Cardiac septum (tissue), 1 donor: ENCODE measurements at regions of chr17 and their contacts with region 1.

Region 1: GRCh38 chr17:2087597-2088211 is 32.8 kb downstream of the HIC1 start:
- DNase-seq: no peak

Region 2: DNA sequence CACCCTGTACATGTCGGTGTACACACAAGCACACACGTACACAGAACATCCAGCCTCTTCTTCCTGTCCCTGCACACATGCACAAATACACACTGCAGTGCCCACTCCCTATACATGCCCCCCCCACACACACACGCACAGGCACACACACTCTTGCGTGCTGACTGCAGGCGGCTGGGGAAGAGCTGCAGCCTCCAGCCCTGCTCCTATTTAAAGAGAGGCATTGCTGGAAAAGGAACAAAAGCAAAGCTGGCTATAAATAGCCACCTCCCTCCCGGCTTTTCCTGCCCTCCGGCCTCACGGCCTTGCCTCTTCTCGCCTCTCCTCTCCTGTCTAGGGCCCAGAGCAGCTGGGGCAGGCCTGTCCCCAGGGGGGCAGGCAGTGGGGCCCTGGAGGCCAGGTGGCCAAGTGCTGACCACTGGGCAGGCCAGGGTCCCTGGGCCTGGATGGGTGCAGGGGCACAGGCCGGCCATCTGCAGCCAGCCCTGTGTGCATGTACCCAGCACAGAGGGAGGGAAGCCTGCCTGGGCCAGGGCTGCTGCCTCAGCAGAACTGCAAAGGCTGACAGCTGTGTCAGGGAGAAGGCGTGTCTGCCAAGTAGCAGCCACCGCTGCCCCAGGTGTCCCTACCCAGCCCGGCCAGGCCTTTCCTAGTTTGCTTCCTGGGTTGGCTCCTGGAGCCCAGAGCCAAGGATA is 88.0 kb before region 1 on chr17:
- intact Hi-C with region 1: no loop called
- DNase-seq: peak; percentile 83

Region 3: GRCh38 chr17:2075336-2076086 is 12.2 kb before region 1 on chr17:
- intact Hi-C with region 1: loop called (anchors 2 kb)
- DNase-seq: no peak